ENCODE measurements at regions of chr6 and their contacts with region 1.

Region 1: DNA sequence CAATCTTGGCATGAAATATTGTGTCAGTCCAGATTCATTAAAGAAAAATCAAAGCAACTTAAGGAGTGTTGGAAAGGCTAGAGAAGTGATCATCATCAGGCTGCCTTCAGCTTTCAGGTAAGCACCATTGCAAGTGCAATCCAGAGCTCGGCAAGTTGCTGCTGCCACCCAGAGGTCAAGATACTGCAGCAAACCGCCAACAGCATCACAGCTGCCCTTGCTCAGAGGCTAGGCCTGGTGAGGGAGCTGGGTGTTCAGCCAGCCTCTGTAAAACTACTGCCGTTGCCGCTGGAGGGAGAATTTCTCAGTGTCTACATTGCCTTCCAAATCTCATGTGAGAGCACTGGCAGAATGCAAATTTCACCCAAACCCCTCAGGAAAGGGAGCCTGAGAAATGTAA is 5.8 kb upstream of the SYNE1 start:
- DNase-seq: peak; percentile 32
- ATAC-seq: no peak
- H3K4me3 Mint-ChIP-seq: no peak overlapping the region
- H3K27ac Mint-ChIP-seq: no peak overlapping the region
- H3K4me1 Mint-ChIP-seq: no peaks in the 10 kb centered on the region
- H3K27me3 Mint-ChIP-seq: peaks cover 8% of the 10 kb centered on the region

Region 2: GRCh38 chr6:152552616-152553209 is 90.3 kb before region 1 on chr6:
- CTCF ChIA-PET with region 1: interaction called, 13 read pairs
- POLR2A ChIA-PET with region 1: no interaction called
- DNase-seq: peak; percentile 49
- ATAC-seq: peak; percentile 73
- H3K4me3 Mint-ChIP-seq: no peak overlapping the region
- H3K27ac Mint-ChIP-seq: no peak overlapping the region
- H3K4me1 Mint-ChIP-seq: no peaks in the 10 kb centered on the region
- H3K27me3 Mint-ChIP-seq: no peaks in the 10 kb centered on the region

Region 3: GRCh38 chr6:152598901-152599537 is 44.0 kb before region 1 on chr6:
- CTCF ChIA-PET with region 1: no interaction called
- POLR2A ChIA-PET with region 1: no interaction called
- DNase-seq: no peak
- ATAC-seq: no peak
- H3K4me3 Mint-ChIP-seq: no peak overlapping the region
- H3K27ac Mint-ChIP-seq: no peak overlapping the region
- H3K4me1 Mint-ChIP-seq: no peaks in the 10 kb centered on the region
- H3K27me3 Mint-ChIP-seq: no peaks in the 10 kb centered on the region

Region 4: GRCh38 chr6:152630832-152631231 is 12.2 kb before region 1 on chr6:
- CTCF ChIA-PET with region 1: interaction called, 13 read pairs
- POLR2A ChIA-PET with region 1: no interaction called
- DNase-seq: no peak
- ATAC-seq: no peak
- H3K4me3 Mint-ChIP-seq: no peak overlapping the region
- H3K27ac Mint-ChIP-seq: no peak overlapping the region
- H3K4me1 Mint-ChIP-seq: peaks cover 7% of the 10 kb centered on the region
- H3K27me3 Mint-ChIP-seq: peaks cover 18% of the 10 kb centered on the region

Measured in activated CD8-positive, alpha-beta T cell treated with anti-CD3 and anti-CD28 coated beads, Interleukin-2, amount 10 ng/mL, durations not matched to agents 7 days and 5 days (primary cell).